Ovary (tissue), 10 donors: ENCODE measurements at regions of chr2 and their contacts with region 1.

Region 1: GRCh38 chr2:219571311-219572236 is at the start of gene OBSL1:
- DNase-seq: peak; percentile 93 to 96 (median 94)
- H3K4me3 ChIP-seq: peak within 1 kb of the TSS; percentile 65
- H3K27ac ChIP-seq: peak within 1 kb of the TSS; percentile 95 to 97
- H3K4me1 ChIP-seq: peaks cover 11% of the 10 kb centered on the region
- H3K27me3 ChIP-seq: no peaks in the 10 kb centered on the region
- CTCF ChIP-seq: peak in 1 of 3 donors; percentile 14
- EP300 ChIP-seq: no peak
- POLR2A ChIP-seq: peak; percentile 49
- total RNA-seq, gene OBSL1: 230 to 740 (median 473) TPM

Region 2: GRCh38 chr2:219530048-219530963 is 41.3 kb before region 1 on chr2:
- intact Hi-C with region 1: no loop called
- DNase-seq: peak; percentile 85 to 92 (median 89)
- H3K4me3 ChIP-seq: peak overlapping the region; percentile 22
- H3K27ac ChIP-seq: no peak overlapping the region
- H3K4me1 ChIP-seq: no peaks in the 10 kb centered on the region
- H3K27me3 ChIP-seq: no peaks in the 10 kb centered on the region
- CTCF ChIP-seq: peak; percentile 89 to 99 (median 99)
- EP300 ChIP-seq: no peak
- POLR2A ChIP-seq: no peak

Region 3: DNA sequence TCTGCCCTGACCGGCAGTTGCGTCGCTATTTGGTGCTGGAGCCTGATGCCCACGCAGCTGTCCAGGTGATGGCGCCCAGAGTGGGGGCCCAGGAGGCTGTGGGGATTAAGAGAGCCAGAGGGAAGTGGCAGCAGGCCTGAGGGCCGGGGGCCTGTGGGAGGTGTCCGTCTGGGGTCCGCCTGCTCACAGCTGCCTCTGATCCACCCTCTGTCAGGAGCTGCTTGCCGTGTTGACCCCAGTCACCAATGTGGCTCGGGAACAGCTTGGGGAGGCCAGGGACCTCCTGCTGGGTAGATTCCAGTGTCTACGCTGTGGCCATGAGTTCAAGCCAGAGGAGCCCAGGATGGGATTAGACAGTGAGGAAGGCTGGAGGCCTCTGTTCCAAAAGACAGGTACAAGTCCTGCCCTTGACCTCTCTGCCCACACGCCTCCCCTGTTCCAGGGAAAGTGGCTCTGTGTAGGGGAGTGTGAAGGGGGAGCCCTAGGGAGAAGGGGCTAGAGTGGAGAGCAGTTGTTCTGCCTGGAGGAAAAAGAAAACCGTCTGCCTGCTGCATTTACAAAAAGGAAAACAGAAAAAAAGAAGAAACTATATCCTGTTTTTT is 37.7 kb after region 1 on chr2:
- intact Hi-C with region 1: loop called in 2 of 4 experiments (anchors 5 kb)
- DNase-seq: peak; percentile 54 to 77 (median 67)
- H3K4me3 ChIP-seq: no peak overlapping the region
- H3K27ac ChIP-seq: peak overlapping the region; percentile 93 to 95
- H3K4me1 ChIP-seq: peaks cover 61% of the 10 kb centered on the region
- H3K27me3 ChIP-seq: no peaks in the 10 kb centered on the region
- CTCF ChIP-seq: no peak
- EP300 ChIP-seq: no peak
- POLR2A ChIP-seq: no peak

Region 4: DNA sequence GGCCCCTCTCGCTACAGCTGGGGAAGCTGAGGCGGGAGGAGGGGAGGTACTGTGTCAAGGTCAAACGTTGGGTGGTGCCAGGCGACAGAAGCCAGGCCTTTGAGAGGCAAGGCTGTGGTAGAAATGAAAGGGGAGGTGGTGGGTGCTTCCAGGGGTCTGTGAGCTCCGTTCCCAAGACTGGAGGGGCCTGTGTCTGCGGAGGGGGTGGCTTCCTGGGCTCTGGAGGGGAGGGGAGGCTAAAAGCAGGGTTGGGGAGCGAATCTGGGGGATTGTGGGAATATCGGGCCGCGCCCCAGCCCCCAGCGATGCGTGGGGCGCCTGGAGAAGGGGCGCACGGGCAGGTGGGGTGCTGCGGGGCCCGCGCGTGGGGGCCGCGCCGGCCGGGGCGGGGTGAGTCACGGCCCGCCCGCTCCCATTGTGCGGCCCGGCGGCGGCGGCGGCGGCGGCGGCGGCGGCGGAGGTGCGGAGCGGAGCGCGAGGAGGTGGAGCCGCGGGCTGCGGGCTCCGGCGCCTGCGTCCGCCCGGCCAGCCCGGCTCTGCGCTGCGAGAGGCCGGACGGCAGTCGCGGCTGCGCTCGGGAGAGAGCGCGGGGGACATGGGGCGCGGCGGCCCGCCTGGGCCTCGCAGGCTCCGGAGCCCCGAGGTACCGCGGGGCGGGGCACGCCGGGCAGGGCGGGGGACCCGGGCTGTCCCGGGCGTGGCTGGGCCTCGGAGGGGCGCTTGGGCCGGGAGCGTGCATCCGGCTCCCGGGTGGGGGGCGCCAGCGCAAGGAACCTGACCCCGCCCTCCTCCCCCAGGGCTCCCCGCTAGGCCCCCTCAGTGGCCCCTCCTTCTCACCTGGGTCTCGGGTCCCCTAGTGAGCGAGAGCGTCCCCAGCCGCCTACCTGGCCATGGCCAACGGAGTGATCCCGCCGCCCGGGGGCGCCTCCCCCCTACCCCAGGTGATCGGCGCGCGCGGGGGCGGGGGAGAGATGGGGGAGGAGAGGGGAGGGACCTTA is 55.8 kb after region 1 on chr2 and contains the start of gene SLC4A3:
- intact Hi-C with region 1: loop called in 1 of 4 experiments (anchors 5 kb)
- DNase-seq: peak; percentile 58 to 74 (median 69)
- H3K4me3 ChIP-seq: peak within 1 kb of the TSS; percentile 48
- H3K27ac ChIP-seq: peak within 1 kb of the TSS; percentile 71 to 97
- H3K4me1 ChIP-seq: peaks cover 12% of the 10 kb centered on the region
- H3K27me3 ChIP-seq: no peaks in the 10 kb centered on the region
- CTCF ChIP-seq: no peak
- EP300 ChIP-seq: no peak
- POLR2A ChIP-seq: no peak
- total RNA-seq, gene SLC4A3: 29.6 to 232 (median 106) TPM